ENCODE measurements at regions of chr12 and their contacts with region 1.

Region 1: GRCh38 chr12:103956516-103957027 is 9.1 kb upstream of the TDG start:
- DNase-seq: no peak
- ATAC-seq: peak; percentile 61
- H3K4me3 ChIP-seq: peak overlapping the region; percentile 84 to 90
- H3K27ac ChIP-seq: peak overlapping the region; percentile 90
- H3K4me1 ChIP-seq: peaks cover 14 to 21% of the 10 kb centered on the region in 2 experiments; a peak in 3 of 4 replicates
- H3K27me3 ChIP-seq: no peaks in the 10 kb centered on the region
- CTCF ChIP-seq: no peak
- POLR2A ChIP-seq: no peak
- RAD21 ChIP-seq: no peak

Region 2: DNA sequence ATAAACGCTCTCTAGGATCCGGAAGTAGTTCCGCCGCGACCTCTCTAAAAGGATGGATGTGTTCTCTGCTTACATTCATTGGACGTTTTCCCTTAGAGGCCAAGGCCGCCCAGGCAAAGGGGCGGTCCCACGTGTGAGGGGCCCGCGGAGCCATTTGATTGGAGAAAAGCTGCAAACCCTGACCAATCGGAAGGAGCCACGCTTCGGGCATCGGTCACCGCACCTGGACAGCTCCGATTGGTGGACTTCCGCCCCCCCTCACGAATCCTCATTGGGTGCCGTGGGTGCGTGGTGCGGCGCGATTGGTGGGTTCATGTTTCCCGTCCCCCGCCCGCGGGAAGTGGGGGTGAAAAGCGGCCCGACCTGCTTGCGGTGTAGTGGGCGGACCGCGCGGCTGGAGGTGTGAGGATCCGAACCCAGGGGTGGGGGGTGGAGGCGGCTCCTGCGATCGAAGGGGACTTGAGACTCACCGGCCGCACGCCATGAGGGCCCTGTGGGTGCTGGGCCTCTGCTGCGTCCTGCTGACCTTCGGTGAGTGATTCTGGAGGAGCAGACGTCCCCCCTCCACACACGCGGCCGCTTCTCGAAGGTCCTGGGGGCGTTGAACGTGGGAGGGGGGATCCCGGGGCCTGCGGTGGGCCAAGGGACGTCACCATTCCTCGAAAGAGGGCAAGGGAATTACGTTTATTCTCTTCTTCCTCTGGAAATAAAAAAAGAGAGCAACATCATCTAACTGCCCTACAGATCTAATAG is 26.4 kb before region 1 on chr12 and contains the start of gene HSP90B1:
- CTCF ChIA-PET with region 1: no interaction called
- POLR2A ChIA-PET with region 1: interaction called, 11 read pairs
- RAD21 ChIA-PET with region 1: interaction called in 1 of 2 experiments, 3 read pairs
- intact Hi-C with region 1: loop called (anchors 2 kb)
- DNase-seq: peak; percentile 100
- ATAC-seq: peak; percentile 89
- H3K4me3 ChIP-seq: peak within 1 kb of the TSS; percentile 84 to 86
- H3K27ac ChIP-seq: peak within 1 kb of the TSS; percentile 68
- H3K4me1 ChIP-seq: peaks cover 8 to 27% of the 10 kb centered on the region in 2 experiments
- H3K27me3 ChIP-seq: no peaks in the 10 kb centered on the region
- CTCF ChIP-seq: no peak
- POLR2A ChIP-seq: peak; percentile 68
- RAD21 ChIP-seq: no peak
- total RNA-seq, gene HSP90B1: 888 TPM